Sigmoid colon (tissue), 7 donors: ENCODE measurements at regions of chr1 and their contacts with region 1.

Region 1: DNA sequence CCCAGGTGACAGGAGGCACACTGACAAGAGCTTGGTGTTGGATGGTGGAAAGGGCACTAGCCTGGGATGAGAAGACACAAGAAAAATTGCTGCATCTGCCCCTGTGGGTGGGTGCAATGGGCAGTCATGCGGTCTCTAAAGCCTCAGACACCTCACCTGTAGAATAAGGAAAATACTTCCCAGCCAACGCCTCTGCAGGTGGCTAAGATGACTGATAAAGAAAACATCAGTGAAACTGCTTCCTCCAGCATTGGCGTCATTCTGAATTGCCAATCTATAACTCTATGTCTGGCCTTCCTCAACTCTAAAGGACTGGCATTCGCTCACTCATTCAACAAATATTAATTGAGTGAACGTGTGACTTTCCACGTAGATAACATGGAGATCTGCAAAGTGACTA is 100.4 kb upstream of the F3 start:
- DNase-seq: no peak
- H3K4me3 ChIP-seq: no peak overlapping the region
- H3K27ac ChIP-seq: no peak overlapping the region
- H3K4me1 ChIP-seq: no peaks in the 10 kb centered on the region
- H3K27me3 ChIP-seq: no peaks in the 10 kb centered on the region
- CTCF ChIP-seq: no peak
- EP300 ChIP-seq: no peak
- POLR2A ChIP-seq: no peak

Region 2: GRCh38 chr1:94541175-94542087 is 100.6 kb before region 1 on chr1 and contains the start of gene F3:
- intact Hi-C with region 1: loop called (anchors 5 kb)
- DNase-seq: peak; percentile 96
- H3K4me3 ChIP-seq: peak within 1 kb of the TSS; percentile 73 to 80 (median 76)
- H3K27ac ChIP-seq: peak within 1 kb of the TSS; percentile 85 to 89 (median 88)
- H3K4me1 ChIP-seq: peaks cover 0 to 35% (median 13%) of the 10 kb centered on the region in 4 donors
- H3K27me3 ChIP-seq: no peaks in the 10 kb centered on the region
- CTCF ChIP-seq: no peak
- EP300 ChIP-seq: no peak
- POLR2A ChIP-seq: peak; percentile 90 to 91
- total RNA-seq, gene F3: 19.3 to 53.7 (median 19.3) TPM

Region 3: DNA sequence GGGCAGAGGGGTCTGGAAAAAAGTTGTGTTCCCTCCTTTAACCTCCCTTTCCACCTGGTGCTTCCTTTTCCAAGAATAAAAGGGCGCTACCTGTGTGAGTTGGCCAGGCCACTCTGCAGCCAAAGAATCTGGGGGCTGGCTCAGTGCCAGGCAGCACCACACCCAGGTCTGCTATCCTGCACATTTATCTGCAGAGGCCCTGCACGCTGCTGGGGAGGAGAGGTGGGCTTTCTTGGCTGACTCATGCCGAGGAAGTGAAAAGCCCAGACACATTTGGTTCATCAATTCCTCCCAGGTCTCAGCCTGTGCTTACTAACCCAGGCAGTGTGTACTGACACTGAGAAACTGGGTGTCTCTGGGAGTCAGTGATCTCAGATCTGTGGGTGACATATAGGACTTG is 20.6 kb before region 1 on chr1:
- intact Hi-C with region 1: no loop called
- DNase-seq: no peak
- H3K4me3 ChIP-seq: no peak overlapping the region
- H3K27ac ChIP-seq: peak overlapping the region in 1 of 4 donors; percentile 17
- H3K4me1 ChIP-seq: peaks cover 0 to 18% (median 11%) of the 10 kb centered on the region in 4 donors
- H3K27me3 ChIP-seq: no peaks in the 10 kb centered on the region
- CTCF ChIP-seq: no peak
- EP300 ChIP-seq: no peak
- POLR2A ChIP-seq: no peak